BJ (cell line): ENCODE measurements at regions of chr1 and their contacts with region 1.

Region 1: DNA sequence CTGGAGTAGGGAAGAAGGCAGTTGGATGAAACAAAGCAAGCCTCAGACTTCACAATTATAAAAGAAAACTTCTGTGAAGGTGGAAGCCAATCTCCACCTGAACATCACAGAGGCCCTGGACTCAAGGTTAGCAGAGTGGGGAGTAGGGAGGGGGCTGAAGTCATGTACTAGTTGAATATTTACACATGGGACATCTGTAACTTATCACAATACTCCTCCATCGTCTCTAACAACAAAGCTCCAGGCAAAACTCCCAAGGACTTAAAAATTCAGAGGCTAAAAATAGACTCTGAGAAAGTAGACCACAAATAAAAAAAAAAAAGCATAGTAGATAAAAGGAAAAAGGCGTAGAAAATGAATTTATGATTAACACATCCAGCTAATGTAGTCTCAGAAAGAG is 326.3 kb upstream of the PKN2 start:
- DNase-seq: no peak
- H3K4me3 ChIP-seq: no peak overlapping the region
- H3K27me3 ChIP-seq: no peaks in the 10 kb centered on the region
- CTCF ChIP-seq: no peak

Region 2: GRCh38 chr1:87615491-87615890 is 742.2 kb before region 1 on chr1:
- CTCF ChIA-PET with region 1: no interaction called
- POLR2A ChIA-PET with region 1: interaction called, 10 read pairs
- DNase-seq: no peak
- H3K4me3 ChIP-seq: no peak overlapping the region
- H3K27me3 ChIP-seq: no peaks in the 10 kb centered on the region
- CTCF ChIP-seq: no peak